Left lung (tissue), 14 donors: ENCODE measurements at regions of chr22 and their contacts with region 1.

Region 1: GRCh38 chr22:37965940-37966664 is 12.6 kb downstream of the POLR2F start:
- DNase-seq: peak in 1 of 4 donors; percentile 18
- ATAC-seq: peak; percentile 27
- H3K4me3 ChIP-seq: no peak overlapping the region
- H3K27ac ChIP-seq: no peak overlapping the region
- H3K4me1 ChIP-seq: peaks cover 0 to 3% of the 10 kb centered on the region in 2 donors
- H3K27me3 ChIP-seq: no peaks in the 10 kb centered on the region
- CTCF ChIP-seq: no peak

Region 2: GRCh38 chr22:37824674-37825641 is 141.1 kb before region 1 on chr22:
- intact Hi-C with region 1: loop called in 1 of 2 experiments (anchors 10 kb)
- DNase-seq: peak in 1 of 4 donors; percentile 82
- ATAC-seq: no peak
- H3K4me3 ChIP-seq: peak overlapping the region in 1 of 2 donors; percentile 32
- H3K27ac ChIP-seq: no peak overlapping the region
- H3K4me1 ChIP-seq: peaks cover 0 to 16% of the 10 kb centered on the region in 2 donors
- H3K27me3 ChIP-seq: peaks cover 0 to 58% of the 10 kb centered on the region in 2 donors
- CTCF ChIP-seq: no peak

Region 3: GRCh38 chr22:37887610-37888378 is 78.3 kb before region 1 on chr22:
- intact Hi-C with region 1: loop called in 1 of 2 experiments (anchors 10 kb)
- DNase-seq: peak in 3 of 4 donors; percentile 60 to 87 (median 80)
- ATAC-seq: peak; percentile 82
- H3K4me3 ChIP-seq: no peak overlapping the region
- H3K27ac ChIP-seq: peak overlapping the region; percentile 53
- H3K4me1 ChIP-seq: peaks cover 12 to 15% of the 10 kb centered on the region in 2 donors
- H3K27me3 ChIP-seq: no peaks in the 10 kb centered on the region
- CTCF ChIP-seq: peak; percentile 37 to 44

Region 4: DNA sequence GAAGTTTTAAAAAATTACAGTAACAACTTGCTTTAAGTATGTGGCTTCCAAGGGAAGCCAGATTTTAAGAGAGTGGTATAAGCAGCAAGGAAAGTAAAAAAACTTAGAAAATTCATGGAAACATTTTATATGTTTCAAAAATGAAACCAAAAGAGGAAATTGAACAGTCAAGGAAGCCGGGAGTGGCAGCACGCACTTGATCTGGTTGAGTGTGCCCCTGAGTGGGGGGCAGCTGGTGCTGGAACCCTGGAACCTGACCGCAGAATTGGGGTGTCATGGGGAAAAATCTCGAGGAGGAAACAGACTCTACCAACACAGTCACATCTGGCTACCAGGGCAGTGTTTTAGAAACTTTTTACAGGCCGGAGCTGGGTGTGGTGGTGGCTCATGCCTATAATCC is 46.0 kb before region 1 on chr22:
- intact Hi-C with region 1: no loop called
- DNase-seq: no peak
- ATAC-seq: no peak
- H3K4me3 ChIP-seq: no peak overlapping the region
- H3K27ac ChIP-seq: peak overlapping the region in 1 of 2 donors; percentile 34
- H3K4me1 ChIP-seq: peaks cover 0 to 19% of the 10 kb centered on the region in 2 donors
- H3K27me3 ChIP-seq: no peaks in the 10 kb centered on the region
- CTCF ChIP-seq: no peak

Region 5: GRCh38 chr22:38088629-38089473 is 122.7 kb after region 1 on chr22:
- intact Hi-C with region 1: no loop called
- DNase-seq: peak in 1 of 4 donors; percentile 61
- ATAC-seq: peak; percentile 49
- H3K4me3 ChIP-seq: peak overlapping the region; percentile 10 to 19
- H3K27ac ChIP-seq: no peak overlapping the region
- H3K4me1 ChIP-seq: peaks cover 0 to 11% of the 10 kb centered on the region in 2 donors
- H3K27me3 ChIP-seq: peaks cover 0 to 31% of the 10 kb centered on the region in 2 donors
- CTCF ChIP-seq: no peak